ENCODE measurements at regions of chr2 and their contacts with region 1.

Region 1: DNA sequence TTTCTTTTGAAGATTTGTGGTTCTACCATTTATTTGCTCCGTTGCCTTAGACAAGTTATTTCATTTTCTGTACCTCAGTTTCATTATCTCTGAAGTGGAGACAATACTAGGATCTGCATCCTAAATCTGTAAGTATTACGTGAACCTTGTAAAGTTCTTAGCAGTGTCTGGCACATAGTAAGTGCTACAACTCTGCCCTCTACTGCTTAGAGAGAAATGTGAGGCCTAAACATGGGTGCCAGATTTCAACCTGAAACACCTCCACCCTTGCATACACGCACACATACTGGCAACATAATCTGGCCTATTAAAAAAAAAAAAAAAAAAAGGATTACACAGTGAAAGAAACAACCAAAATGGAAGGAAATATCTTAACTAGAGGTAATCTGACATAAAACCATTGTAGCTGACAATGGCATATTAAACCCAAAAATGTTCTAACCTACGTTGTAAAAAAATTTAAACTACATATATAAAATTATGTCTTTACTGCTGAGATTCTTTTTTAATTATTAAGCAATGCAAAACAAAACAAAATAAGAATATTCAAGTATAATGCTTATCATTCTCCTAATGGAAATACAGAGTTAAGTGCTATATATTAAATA is 132.6 kb downstream of the MAP2 start:
- DNase-seq: peak; percentile 22 to 66
- H3K4me3 ChIP-seq: no peak overlapping the region
- H3K4me1 ChIP-seq: no peaks in the 10 kb centered on the region
- H3K27me3 ChIP-seq: no peaks in the 10 kb centered on the region

Region 2: DNA sequence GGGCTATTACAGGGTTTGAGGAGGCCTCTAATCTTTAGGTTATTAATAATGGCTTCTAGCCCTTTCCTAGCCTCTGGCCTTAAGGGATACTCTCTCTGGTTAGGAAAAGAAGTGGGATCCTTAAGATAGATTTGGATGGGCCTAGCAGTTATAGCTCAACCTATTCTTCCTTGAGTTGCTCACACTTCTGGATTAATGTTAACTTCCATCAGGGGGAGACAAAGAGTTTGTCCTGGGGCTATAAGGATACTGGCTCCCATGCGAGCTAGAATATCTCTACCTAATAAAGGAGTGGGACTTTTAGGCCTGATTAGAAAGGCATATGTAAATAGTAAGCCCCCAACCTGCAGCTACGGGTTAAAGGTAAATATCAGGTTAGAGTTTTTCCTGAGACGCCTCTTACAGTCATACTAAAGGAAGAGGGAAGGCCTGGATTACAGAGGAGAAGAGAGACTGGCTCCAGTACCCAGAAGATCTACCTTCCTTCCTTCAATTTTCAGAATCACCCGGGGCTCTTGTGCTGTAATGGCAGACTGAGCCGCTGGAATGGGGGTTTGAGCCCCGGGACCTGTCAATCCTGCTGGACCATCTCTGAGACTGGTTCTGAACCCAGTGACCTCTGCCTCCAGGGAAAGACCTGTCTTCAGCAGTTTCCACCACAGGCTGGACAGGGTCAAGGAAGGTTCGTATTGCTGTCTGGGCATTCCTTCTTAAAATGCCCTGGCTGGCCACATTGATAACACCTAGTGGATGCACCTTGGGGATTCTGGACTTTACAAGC is 1164.0 kb before region 1 on chr2:
- in situ Hi-C with region 1: loop called (anchors 25 kb)
- DNase-seq: peak in 1 of 2 experiments; percentile 10
- H3K4me3 ChIP-seq: no peak overlapping the region
- H3K4me1 ChIP-seq: no peaks in the 10 kb centered on the region
- H3K27me3 ChIP-seq: no peaks in the 10 kb centered on the region

Region 3: DNA sequence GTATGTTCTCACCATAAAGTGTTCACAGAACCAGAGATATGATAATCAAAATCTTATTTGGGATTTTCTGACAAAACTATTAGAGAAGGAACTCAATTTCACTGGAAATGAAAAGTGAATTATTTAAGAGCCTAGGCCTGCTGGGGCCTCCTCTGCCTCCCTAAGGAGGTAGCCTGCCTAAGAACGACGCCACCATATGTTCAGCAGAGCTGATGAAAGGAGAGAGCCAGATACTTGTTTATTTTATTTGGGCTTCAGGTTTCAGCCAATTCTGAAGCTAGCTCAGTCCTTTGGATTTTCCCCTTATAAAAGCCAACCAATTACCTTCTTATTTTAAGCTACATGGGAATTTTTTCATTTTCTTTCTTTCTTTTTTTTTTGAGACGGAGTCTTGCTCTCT is 565.7 kb before region 1 on chr2:
- in situ Hi-C with region 1: no loop called
- DNase-seq: no peak
- H3K4me3 ChIP-seq: no peak overlapping the region
- H3K4me1 ChIP-seq: no peaks in the 10 kb centered on the region
- H3K27me3 ChIP-seq: no peaks in the 10 kb centered on the region

Region 4: DNA sequence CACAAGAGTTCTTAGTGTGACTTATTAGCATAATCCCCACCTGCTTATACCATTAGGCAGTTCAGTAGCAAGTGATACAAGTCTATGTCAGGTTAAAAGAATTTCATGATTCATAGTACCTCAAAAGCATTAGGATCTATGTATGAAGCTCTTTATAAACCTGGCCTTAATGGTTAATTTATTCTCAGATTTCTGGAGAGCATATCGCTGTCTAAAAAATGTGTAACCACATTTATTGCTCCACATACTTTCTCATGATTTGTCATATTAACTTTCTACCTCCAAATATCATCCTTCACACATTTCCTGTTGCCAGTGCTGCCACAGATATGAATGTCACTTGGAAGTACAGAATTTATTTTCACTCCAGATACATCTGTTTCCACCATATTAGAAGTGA is 465.4 kb before region 1 on chr2:
- in situ Hi-C with region 1: no loop called
- DNase-seq: peak in 1 of 2 experiments; percentile 6
- H3K4me3 ChIP-seq: no peak overlapping the region
- H3K4me1 ChIP-seq: no peaks in the 10 kb centered on the region
- H3K27me3 ChIP-seq: peaks cover 9% of the 10 kb centered on the region; the same call in 1 of the 2 replicates

Region 5: DNA sequence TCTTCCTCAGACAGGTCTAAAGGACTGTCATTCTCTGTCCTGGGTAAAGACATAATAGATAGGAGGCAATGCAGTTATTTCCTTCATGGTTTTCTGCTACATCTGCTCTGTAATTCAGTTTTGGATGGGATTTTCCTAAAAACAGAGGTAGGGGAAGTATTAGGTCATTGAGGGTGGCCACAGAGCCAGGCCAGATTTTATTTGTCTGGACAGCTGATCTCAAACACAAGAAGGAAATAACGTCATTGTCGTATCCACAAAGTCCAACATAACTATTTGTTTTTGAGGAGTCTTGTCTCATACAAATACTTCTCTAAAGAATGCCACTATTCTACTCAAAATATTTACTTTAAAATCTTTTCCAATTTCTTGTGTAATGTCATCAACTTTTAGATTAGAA is 287.4 kb before region 1 on chr2:
- in situ Hi-C with region 1: no loop called
- DNase-seq: no peak
- H3K4me3 ChIP-seq: no peak overlapping the region
- H3K4me1 ChIP-seq: no peaks in the 10 kb centered on the region
- H3K27me3 ChIP-seq: no peaks in the 10 kb centered on the region; the same call in 1 of the 2 replicates

Region 6: GRCh38 chr2:209334198-209335017 is 222.1 kb before region 1 on chr2:
- in situ Hi-C with region 1: loop called (anchors 25 kb)
- DNase-seq: peak; percentile 56 to 71
- H3K4me3 ChIP-seq: no peak overlapping the region
- H3K4me1 ChIP-seq: no peaks in the 10 kb centered on the region
- H3K27me3 ChIP-seq: no peaks in the 10 kb centered on the region

Region 7: DNA sequence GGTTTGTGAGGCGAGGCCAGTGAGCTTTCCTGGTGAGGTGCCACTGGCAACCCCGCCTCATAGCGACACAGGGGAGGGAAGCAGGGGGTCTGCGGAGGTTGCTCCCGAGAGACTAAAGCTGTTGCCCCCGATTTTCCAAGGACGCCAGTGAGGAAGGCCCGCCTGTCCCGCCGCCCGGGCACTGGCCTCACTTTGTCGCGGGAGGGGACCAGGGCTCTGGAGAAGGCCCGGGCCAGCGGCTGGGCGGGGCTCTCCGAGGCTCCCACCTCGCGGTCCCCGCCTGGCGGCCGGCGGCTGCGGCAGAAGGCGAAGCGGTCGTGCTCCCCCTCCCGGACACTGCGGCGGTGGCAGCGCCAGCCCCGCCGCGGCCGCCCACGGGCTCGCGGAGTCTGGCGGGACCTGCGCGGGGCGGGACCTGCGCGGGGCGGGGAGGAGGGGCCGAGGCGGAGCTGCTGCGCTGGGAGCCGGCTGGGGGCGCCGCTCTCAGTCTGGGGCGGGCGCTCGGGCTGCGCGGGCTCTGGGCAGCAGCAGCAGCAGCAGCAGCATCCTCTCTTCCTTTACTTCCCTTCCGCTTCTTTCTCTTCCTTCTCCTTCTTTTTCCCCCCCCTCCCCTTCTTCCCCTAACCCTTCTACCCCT is 132.8 kb before region 1 on chr2 and contains the start of gene MAP2:
- in situ Hi-C with region 1: loop called (anchors 10 kb)
- DNase-seq: peak; percentile 75 to 88
- H3K4me3 ChIP-seq: peak within 1 kb of the TSS; percentile 38
- H3K4me1 ChIP-seq: peaks cover 10% of the 10 kb centered on the region
- H3K27me3 ChIP-seq: peaks cover 2% of the 10 kb centered on the region; the same call in 1 of the 2 replicates

Measured in HAP-1 (cell line).